Activated CD4-positive, alpha-beta T cell treated with anti-CD3 and anti-CD28 coated beads, Interleukin-2, amount 10 ng/mL, durations not matched to agents 24 days and 14 days (primary cell): ENCODE measurements at regions of chr7 and their contacts with region 1.

Region 1: GRCh38 chr7:116929914-116930913 is 23.1 kb upstream of the ST7 start:
- DNase-seq: peak; percentile 90
- H3K4me3 Mint-ChIP-seq: no peak overlapping the region
- H3K27ac Mint-ChIP-seq: no peak overlapping the region
- H3K4me1 Mint-ChIP-seq: peaks cover 4% of the 10 kb centered on the region
- H3K27me3 Mint-ChIP-seq: peaks cover 23% of the 10 kb centered on the region

Region 2: DNA sequence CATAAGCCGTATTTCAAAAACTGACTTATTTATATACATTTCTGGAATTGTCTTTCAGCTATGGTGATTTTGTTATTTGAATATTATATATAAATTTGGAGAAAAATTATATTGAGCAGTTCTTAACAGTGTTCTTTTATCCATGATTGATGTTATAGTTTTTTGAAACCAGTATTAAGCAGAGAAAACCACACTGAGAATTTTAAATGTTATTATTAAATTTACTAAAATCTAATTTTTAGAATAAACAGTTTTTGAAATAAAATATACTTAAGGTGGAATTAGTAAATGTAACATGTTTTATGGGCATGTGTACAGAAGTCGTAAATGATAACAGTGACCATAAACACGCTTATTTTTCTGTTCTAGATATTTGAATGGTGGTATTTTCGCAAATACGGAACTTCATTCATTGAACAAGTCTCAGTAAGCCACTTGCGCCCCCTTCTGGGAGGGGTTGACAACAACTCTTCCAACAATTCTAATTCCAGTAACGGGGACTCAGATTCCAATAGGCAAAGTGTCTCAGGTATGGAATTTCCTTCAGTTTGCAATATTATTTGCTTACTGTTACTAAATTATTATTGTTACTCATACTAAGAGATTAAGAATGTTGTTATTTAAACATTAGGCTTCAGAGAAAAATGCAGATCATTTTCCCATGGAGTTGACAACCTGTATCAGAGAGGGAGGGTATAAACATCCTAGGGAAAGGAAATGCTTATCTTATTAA is 189.1 kb after region 1 on chr7:
- intact Hi-C with region 1: loop called (anchors 2 kb)
- DNase-seq: peak; percentile 90
- H3K4me3 Mint-ChIP-seq: no peak overlapping the region
- H3K27ac Mint-ChIP-seq: no peak overlapping the region
- H3K4me1 Mint-ChIP-seq: no peaks in the 10 kb centered on the region
- H3K27me3 Mint-ChIP-seq: peaks cover 26% of the 10 kb centered on the region

Region 3: DNA sequence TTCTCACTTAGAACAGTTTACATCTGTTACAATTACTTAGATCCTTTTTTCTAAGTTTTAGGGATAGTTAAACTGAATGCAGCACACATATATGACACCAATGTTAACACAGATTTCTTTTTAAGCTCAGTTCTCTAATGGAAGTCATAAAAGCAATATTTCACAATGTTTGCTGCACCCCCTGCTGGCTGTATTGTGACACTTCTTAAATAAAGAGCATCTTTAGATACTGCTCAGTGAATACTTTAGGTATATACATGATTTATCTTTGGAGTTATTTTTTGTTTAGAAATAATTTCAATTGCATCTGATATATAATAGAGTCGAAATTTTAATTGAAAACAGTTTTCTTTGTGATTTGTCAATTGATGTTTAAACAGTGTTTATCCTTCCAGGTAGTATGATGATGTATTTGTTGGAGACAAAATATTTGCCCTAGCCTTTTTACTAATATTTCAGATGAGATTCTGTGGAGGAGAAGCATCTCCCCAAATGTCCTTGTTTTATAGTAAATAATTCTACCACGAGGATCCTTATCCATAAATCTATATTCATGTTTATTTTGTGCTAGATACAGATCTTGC is 197.5 kb after region 1 on chr7:
- intact Hi-C with region 1: loop called (anchors 1 kb)
- DNase-seq: peak; percentile 79
- H3K4me3 Mint-ChIP-seq: no peak overlapping the region
- H3K27ac Mint-ChIP-seq: no peak overlapping the region
- H3K4me1 Mint-ChIP-seq: peaks cover 2% of the 10 kb centered on the region
- H3K27me3 Mint-ChIP-seq: peaks cover 5% of the 10 kb centered on the region